Prostate gland (tissue), 2 donors: ENCODE measurements at regions of chr17 and their contacts with region 1.

Region 1: DNA sequence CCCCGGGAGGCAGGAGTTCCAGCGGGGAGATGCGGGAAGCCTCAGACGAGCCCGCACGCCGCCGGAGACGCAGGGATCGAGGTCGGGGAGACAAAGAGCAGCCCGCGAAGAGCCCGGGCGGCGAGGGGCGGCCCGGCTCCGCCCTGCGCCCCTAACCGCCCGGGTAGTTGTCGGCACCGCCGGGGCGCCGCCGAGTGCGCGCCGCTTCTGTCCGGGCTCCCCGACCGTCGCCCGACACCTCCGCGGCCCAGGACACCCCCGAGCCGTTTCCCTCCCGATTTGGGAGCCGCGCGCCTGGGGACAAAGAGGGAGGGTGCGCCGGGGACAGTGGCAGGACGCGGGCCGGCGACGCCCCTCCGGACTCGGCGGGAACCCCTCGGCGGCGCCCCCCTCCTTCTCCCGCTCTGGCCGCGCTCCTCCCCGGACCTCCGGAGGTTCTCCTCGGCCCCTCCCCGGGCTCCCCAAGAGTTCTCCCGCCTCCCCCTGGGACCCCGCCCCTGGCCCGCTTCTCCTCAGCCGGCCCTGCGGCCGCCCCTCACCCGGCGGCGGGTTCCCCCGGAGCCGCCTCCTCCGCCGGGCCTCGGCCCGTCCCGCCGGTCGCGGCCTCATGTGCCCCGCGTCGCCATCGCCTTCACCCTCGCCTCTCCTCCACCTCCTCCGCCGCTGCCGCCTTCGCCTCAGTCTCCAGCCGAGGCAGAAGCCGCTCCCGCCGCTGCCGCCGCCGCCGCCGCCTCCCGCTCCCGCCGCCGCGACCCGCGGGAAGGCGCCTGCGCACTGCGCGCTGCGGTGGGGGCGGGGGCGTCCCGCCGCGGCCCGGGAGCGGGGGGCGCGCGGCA is at the start of gene GJC1:
- DNase-seq: no peak
- H3K4me3 ChIP-seq: peak within 1 kb of the TSS; percentile 37 to 44
- H3K27ac ChIP-seq: peak within 1 kb of the TSS; percentile 59 to 69
- H3K4me1 ChIP-seq: no peaks in the 10 kb centered on the region
- H3K27me3 ChIP-seq: peaks cover 12% of the 10 kb centered on the region
- CTCF ChIP-seq: no peak
- POLR2A ChIP-seq: no peak
- total RNA-seq, gene GJC1: 5.3 to 18.3 TPM

Region 2: GRCh38 chr17:44786551-44787081 is 43.1 kb before region 1 on chr17:
- intact Hi-C with region 1: loop called (anchors 5 kb)
- DNase-seq: no peak
- H3K4me3 ChIP-seq: no peak overlapping the region
- H3K27ac ChIP-seq: no peak overlapping the region
- H3K4me1 ChIP-seq: no peaks in the 10 kb centered on the region
- H3K27me3 ChIP-seq: no peaks in the 10 kb centered on the region
- CTCF ChIP-seq: no peak
- POLR2A ChIP-seq: no peak

Region 3: GRCh38 chr17:44850612-44851011 is 20.9 kb after region 1 on chr17:
- intact Hi-C with region 1: no loop called
- DNase-seq: no peak
- H3K4me3 ChIP-seq: no peak overlapping the region
- H3K27ac ChIP-seq: no peak overlapping the region
- H3K4me1 ChIP-seq: no peaks in the 10 kb centered on the region
- H3K27me3 ChIP-seq: no peaks in the 10 kb centered on the region
- CTCF ChIP-seq: no peak
- POLR2A ChIP-seq: no peak

Region 4: DNA sequence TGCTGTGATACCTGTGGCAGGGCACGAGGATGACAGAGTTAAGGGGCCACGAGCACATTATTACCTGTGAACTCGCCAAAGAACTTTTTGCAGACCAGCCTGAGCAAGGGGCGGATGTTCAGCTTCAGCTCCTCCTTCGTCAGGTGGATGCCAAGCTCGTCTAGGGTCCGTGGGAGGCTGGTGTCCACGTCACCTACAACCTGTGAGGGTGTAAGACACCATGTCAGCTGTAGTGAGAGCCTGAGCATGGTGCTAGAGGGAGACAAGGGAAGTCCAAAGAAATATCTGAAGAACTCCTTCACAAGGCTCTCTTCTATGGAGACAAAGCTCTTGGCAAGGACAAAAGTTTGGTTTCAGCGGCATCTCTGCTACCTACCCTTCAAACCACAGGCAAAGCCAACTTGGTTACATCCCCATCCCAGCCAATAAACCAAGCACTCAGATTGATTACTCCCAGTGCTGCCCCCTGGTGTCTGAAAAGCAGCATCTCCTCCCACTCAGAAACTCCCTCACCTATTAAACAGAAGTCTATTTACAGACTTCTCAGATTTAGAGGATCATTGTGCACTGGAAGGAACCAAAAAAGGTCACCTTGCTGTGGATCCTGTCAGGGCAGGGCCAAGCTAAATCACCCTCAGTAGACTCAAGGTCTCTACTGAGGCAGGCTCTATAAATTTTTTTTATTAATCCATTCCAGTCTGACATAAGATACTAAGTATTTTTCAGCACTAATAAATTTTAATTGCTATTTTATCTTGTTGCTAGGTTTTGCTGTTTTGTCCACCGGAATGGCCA is 35.3 kb after region 1 on chr17:
- intact Hi-C with region 1: loop called (anchors 5 kb)
- DNase-seq: peak; percentile 62
- H3K4me3 ChIP-seq: no peak overlapping the region
- H3K27ac ChIP-seq: peak overlapping the region in 1 of 2 donors; percentile 30
- H3K4me1 ChIP-seq: no peaks in the 10 kb centered on the region
- H3K27me3 ChIP-seq: no peaks in the 10 kb centered on the region
- CTCF ChIP-seq: peak; percentile 74 to 87 (median 81)
- POLR2A ChIP-seq: no peak